Activated naive CD4-positive, alpha-beta T cell treated with anti-CD3 and anti-CD28 coated beads for 36 hours (primary cell): ENCODE measurements at regions of chr7 and their contacts with region 1.

Region 1: DNA sequence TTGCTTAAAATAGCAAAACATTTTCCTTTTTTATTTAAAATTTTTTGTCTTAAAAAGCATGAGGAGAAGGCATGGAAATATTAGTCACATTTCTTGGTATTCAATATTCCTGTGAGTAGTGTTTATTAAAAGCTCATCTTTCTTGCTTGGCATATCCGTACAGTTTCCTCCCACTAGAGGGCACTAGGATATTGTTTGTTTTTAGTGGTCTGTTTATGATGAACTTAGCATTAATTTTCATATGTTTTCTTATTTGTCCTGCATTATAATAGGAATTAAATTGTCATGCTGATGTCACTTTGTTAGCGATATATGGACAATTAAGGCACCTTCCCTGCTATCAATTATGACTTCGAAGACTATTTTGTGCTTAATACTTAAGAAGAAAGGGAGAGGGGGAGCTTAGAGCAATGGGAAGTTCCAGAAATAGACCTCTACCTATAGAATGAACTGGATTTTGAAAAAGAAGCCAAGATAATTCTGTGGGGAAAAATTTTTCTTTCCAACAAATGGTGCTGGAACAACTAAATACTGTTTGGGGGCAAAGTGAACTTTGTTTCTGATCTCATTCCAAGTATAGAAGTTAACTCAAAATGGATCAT is 91.0 kb upstream of the STRIP2 start:
- DNase-seq: peak; percentile 39
- H3K4me3 Mint-ChIP-seq: no peak overlapping the region
- H3K27ac Mint-ChIP-seq: no peak overlapping the region
- H3K4me1 Mint-ChIP-seq: peaks cover 32% of the 10 kb centered on the region
- H3K27me3 Mint-ChIP-seq: no peaks in the 10 kb centered on the region

Region 2: DNA sequence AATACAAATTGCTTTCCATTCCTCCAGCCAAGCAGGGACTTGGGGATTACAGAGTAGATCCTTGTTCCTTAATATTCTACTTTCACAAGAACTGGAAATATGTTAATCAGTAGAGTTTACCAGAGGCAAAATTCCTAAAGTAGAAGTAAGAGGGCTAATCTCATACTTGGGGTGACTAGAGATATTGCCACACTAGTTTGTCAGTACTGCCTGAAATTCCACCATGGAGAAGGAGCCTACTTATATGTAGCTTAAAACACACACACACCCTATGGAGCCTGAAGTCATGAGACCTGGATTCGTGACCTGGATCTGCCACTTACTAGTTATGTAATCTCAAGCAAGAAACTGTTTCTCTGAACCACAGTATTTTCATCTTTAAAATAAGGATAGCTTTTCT is 124.9 kb after region 1 on chr7:
- CTCF ChIA-PET with region 1: interaction called, 6 read pairs
- intact Hi-C with region 1: loop called (anchors 1 kb)
- DNase-seq: no peak
- H3K4me3 Mint-ChIP-seq: no peak overlapping the region
- H3K27ac Mint-ChIP-seq: no peak overlapping the region
- H3K4me1 Mint-ChIP-seq: peaks cover 12% of the 10 kb centered on the region
- H3K27me3 Mint-ChIP-seq: no peaks in the 10 kb centered on the region

Region 3: DNA sequence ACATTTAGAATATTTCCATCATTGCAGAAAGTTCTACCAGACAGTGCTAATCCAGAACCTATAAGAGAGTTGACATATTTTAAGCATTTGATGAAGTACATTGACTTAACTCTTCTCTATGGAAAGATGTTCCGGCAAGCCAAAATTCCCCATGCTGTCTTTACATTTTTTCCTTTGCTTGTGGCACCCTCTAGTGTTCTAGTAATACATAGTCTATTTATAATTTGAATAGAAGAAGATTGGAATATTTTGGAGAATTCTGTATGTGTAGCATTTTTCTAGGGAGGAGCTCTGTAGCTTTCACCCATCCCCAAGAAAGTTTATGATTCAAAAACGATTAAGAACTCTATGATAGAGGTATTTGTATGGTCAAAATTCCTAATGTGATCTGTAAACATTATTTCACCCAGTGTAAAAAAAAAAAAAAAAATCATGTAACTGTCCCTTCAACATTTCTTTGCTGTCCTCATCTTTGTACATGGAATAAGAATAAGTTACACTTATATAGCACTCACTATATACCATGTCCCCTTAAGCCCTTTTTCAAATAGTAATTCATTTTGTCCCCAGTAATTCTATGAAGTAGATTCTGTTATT is 301.5 kb after region 1 on chr7:
- CTCF ChIA-PET with region 1: no interaction called
- intact Hi-C with region 1: loop called (anchors 2 kb)
- DNase-seq: no peak
- H3K4me3 Mint-ChIP-seq: no peak overlapping the region
- H3K27ac Mint-ChIP-seq: no peak overlapping the region
- H3K4me1 Mint-ChIP-seq: peaks cover 24% of the 10 kb centered on the region
- H3K27me3 Mint-ChIP-seq: no peaks in the 10 kb centered on the region

Region 4: DNA sequence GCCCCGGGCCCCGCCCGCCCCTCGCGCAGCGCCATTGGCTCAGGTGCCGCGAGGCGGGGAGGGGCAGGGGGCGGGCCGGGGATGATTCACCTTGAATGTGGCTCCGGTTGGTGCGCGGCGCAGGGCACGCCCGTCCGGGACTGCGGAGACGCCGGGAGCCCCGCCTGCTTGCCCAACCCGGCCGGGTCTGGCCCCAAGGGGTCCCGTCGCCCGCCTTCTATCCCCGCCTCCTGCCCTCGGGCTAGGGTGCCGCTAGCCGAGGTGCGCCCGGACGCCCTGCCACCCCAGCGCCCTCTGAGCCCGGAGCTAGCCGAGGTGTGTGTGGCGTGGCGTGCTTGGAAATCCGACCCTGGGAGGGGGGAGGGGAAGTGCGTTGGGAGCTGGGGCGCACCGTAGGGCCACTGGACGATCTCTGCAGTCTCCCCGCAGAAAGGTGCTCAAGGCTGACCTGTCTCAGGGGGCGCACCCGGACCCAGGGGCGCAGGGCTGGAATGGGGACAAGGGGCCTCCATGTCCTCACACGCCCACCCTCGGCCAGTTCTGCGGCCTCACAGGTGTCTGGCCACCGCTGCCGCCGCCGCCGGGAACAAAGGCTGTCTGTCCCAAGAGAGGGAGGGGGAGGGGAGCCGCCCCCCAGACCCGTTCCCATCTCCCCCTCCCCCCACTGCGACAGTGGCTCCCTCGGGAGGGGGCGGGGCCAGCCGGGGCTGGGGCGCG is 437.2 kb after region 1 on chr7:
- CTCF ChIA-PET with region 1: no interaction called
- intact Hi-C with region 1: loop called (anchors 5 kb)
- DNase-seq: peak; percentile 91
- H3K4me3 Mint-ChIP-seq: peak overlapping the region; percentile 73
- H3K27ac Mint-ChIP-seq: no peak overlapping the region
- H3K4me1 Mint-ChIP-seq: peaks cover 40% of the 10 kb centered on the region
- H3K27me3 Mint-ChIP-seq: peaks cover 57% of the 10 kb centered on the region